Activated naive CD4-positive, alpha-beta T cell treated with anti-CD3 and anti-CD28 coated beads for 36 hours (primary cell): ENCODE measurements at regions of chr2 and their contacts with region 1.

Region 1: GRCh38 chr2:108594132-108594981 is 60.1 kb downstream of the LIMS1 start:
- DNase-seq: peak; percentile 30
- H3K4me3 Mint-ChIP-seq: peak overlapping the region; percentile 17
- H3K27ac Mint-ChIP-seq: no peak overlapping the region
- H3K4me1 Mint-ChIP-seq: peaks cover 49% of the 10 kb centered on the region
- H3K27me3 Mint-ChIP-seq: no peaks in the 10 kb centered on the region

Region 2: GRCh38 chr2:108629417-108629816 is 35.1 kb after region 1 on chr2:
- CTCF ChIA-PET with region 1: interaction called, 57 read pairs
- intact Hi-C with region 1: loop called (anchors 1 kb)
- DNase-seq: no peak
- H3K4me3 Mint-ChIP-seq: no peak overlapping the region
- H3K27ac Mint-ChIP-seq: peak overlapping the region; percentile 81
- H3K4me1 Mint-ChIP-seq: peaks cover 72% of the 10 kb centered on the region
- H3K27me3 Mint-ChIP-seq: no peaks in the 10 kb centered on the region

Region 3: DNA sequence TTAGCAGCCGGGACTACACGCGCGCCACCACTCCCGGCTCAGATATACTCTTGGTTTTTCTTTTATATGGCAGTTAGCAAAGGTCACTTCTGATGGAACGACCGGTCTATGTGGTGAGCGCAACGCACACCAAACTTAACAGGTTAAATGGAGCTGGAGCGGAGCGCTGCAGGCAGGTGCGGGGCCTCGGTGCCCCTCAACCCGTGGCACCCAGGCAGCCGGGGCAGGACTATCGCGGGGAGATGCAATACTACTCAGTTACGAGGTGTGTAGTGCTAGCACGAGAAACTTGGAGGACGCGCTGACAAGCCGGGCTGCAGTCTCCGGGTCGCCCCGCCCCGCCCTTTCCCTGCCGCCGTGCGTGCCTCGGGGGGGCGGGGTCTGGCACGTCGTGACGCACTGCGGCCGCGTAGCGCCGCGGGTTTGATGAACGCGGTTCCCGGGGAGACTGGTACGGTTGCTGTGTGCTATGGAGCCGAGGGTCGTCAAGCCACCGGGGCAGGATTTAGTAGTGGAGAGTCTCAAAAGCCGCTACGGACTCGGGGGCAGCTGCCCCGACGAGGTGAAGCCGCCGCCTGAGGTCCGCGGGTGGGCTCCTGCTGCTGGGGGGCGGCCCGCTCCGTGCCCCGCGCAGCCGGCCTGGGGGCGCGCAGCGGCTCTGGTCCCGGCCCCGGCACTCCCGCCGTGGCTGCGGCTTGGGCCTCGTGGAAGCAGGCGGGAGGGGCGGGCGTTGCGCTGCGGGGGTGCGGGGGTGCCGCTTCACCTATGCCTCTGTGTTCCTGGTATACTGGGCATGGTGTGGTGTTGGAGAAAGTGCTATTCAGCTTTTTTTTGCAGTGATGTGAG is 192.2 kb after region 1 on chr2 and contains the start of gene CCDC138:
- CTCF ChIA-PET with region 1: no interaction called
- intact Hi-C with region 1: loop called (anchors 5 kb)
- DNase-seq: peak; percentile 92
- H3K4me3 Mint-ChIP-seq: peak within 1 kb of the TSS; percentile 97
- H3K27ac Mint-ChIP-seq: peak within 1 kb of the TSS; percentile 87
- H3K4me1 Mint-ChIP-seq: peaks cover 14% of the 10 kb centered on the region
- H3K27me3 Mint-ChIP-seq: no peaks in the 10 kb centered on the region
- total RNA-seq, gene CCDC138: 7.4 to 9.5 TPM